CD4-positive, alpha-beta memory T cell (primary cell): ENCODE measurements at regions of chr2 and their contacts with region 1.

Region 1: GRCh38 chr2:161238560-161239325 is 69.5 kb upstream of the PSMD14 start:
- DNase-seq: peak; percentile 59 to 75 (median 64)
- H3K4me3 ChIP-seq: peak overlapping the region in 1 of 2 donors; percentile 75
- H3K4me3 Mint-ChIP-seq: peak overlapping the region; percentile 88 to 99 (median 94)
- H3K27ac ChIP-seq: peak overlapping the region; percentile 44
- H3K27ac Mint-ChIP-seq: peak overlapping the region; percentile 70 to 97 (median 95)
- H3K4me1 ChIP-seq: peaks cover 48% of the 10 kb centered on the region
- H3K4me1 Mint-ChIP-seq: peaks cover 32 to 73% (median 46%) of the 10 kb centered on the region in 4 donors
- H3K27me3 ChIP-seq: no peaks in the 10 kb centered on the region
- H3K27me3 Mint-ChIP-seq: no peaks in the 10 kb centered on the region

Region 2: GRCh38 chr2:161104054-161104553 is 134.6 kb before region 1 on chr2:
- CTCF ChIA-PET with region 1: no interaction called
- POLR2A ChIA-PET with region 1: no interaction called
- intact Hi-C with region 1: no loop called
- DNase-seq: no peak
- H3K4me3 ChIP-seq: no peak overlapping the region
- H3K4me3 Mint-ChIP-seq: peak overlapping the region in 4 of 8 donors; percentile 13 to 59 (median 37)
- H3K27ac ChIP-seq: no peak overlapping the region
- H3K27ac Mint-ChIP-seq: peak overlapping the region in 1 of 7 donors; percentile 71
- H3K4me1 ChIP-seq: peaks cover 4% of the 10 kb centered on the region
- H3K4me1 Mint-ChIP-seq: peaks cover 5 to 6% (median 6%) of the 10 kb centered on the region in 4 donors
- H3K27me3 ChIP-seq: no peaks in the 10 kb centered on the region
- H3K27me3 Mint-ChIP-seq: peaks cover 2 to 3% of the 10 kb centered on the region in 2 donors

Region 3: GRCh38 chr2:161250864-161251436 is 12.2 kb after region 1 on chr2:
- CTCF ChIA-PET with region 1: interaction called, 11 read pairs
- POLR2A ChIA-PET with region 1: interaction called, 6 read pairs
- intact Hi-C with region 1: no loop called
- DNase-seq: peak in 4 of 5 donors; percentile 11 to 50 (median 24)
- H3K4me3 ChIP-seq: no peak overlapping the region
- H3K4me3 Mint-ChIP-seq: no peak overlapping the region
- H3K27ac ChIP-seq: no peak overlapping the region
- H3K27ac Mint-ChIP-seq: peak overlapping the region in 2 of 7 donors; percentile 4 to 53
- H3K4me1 ChIP-seq: peaks cover 5% of the 10 kb centered on the region
- H3K4me1 Mint-ChIP-seq: peaks cover 10 to 28% (median 20%) of the 10 kb centered on the region in 4 donors
- H3K27me3 ChIP-seq: no peaks in the 10 kb centered on the region
- H3K27me3 Mint-ChIP-seq: no peaks in the 10 kb centered on the region

Region 4: DNA sequence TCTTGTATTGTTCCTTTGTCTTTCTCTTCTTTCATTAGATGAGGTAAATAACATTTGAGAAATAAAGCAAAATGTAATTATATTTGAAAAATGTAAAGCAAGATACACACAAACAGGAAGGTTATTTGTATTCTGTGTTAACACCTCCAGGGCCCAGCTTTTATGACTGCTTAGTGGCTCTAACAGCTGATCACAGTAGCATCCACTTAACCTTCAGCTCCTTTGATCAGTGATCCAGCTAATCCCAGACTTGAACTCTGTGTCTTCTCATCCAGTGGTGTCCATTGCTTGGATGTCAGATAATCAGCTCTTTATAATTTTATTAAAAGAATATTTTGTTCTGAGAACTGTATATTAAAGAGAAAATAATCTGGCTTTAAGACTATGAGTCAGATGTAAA is 114.0 kb after region 1 on chr2:
- CTCF ChIA-PET with region 1: no interaction called
- POLR2A ChIA-PET with region 1: no interaction called
- intact Hi-C with region 1: no loop called
- DNase-seq: no peak
- H3K4me3 ChIP-seq: no peak overlapping the region
- H3K4me3 Mint-ChIP-seq: no peak overlapping the region
- H3K27ac ChIP-seq: no peak overlapping the region
- H3K27ac Mint-ChIP-seq: no peak overlapping the region
- H3K4me1 ChIP-seq: no peaks in the 10 kb centered on the region
- H3K4me1 Mint-ChIP-seq: peaks cover 27 to 32% (median 28%) of the 10 kb centered on the region in 4 donors
- H3K27me3 ChIP-seq: no peaks in the 10 kb centered on the region
- H3K27me3 Mint-ChIP-seq: no peaks in the 10 kb centered on the region

Region 5: DNA sequence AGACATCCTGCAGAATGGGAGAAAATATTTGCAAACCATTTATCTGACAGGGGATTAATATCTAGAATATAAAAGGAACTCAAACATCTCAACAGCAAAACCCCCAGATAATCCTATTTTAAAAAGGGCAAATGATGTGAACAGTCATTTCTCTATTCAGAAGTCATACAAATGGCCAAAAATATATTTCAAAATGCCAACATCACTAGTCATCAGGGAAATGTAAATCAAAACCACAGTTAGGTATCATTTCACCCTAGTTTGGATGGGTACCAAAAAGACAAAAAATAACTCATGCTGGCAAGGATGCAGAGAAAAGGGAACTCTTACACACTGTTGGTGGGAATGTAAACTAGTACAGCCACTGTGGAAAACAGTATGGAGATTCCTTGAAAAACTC is 247.4 kb after region 1 on chr2:
- CTCF ChIA-PET with region 1: no interaction called
- POLR2A ChIA-PET with region 1: no interaction called
- intact Hi-C with region 1: no loop called
- DNase-seq: no peak
- H3K4me3 ChIP-seq: no peak overlapping the region
- H3K4me3 Mint-ChIP-seq: no peak overlapping the region
- H3K27ac ChIP-seq: no peak overlapping the region
- H3K27ac Mint-ChIP-seq: no peak overlapping the region
- H3K4me1 ChIP-seq: no peaks in the 10 kb centered on the region
- H3K4me1 Mint-ChIP-seq: no peaks in the 10 kb centered on the region
- H3K27me3 ChIP-seq: no peaks in the 10 kb centered on the region
- H3K27me3 Mint-ChIP-seq: peaks cover 7 to 9% of the 10 kb centered on the region in 2 donors